Right lobe of liver (tissue), 6 donors: ENCODE measurements at regions of chr2 and their contacts with region 1.

Region 1: GRCh38 chr2:198127627-198128026 is 323.2 kb downstream of the PLCL1 start:
- DNase-seq: peak; percentile 32 to 56 (median 53)
- ATAC-seq: peak; percentile 77 to 87 (median 81)
- H3K4me3 ChIP-seq: no peak overlapping the region
- H3K27ac ChIP-seq: no peak overlapping the region
- H3K4me1 ChIP-seq: no peaks in the 10 kb centered on the region
- H3K27me3 ChIP-seq: no peaks in the 10 kb centered on the region
- CTCF ChIP-seq: peak; percentile 54 to 66 (median 60)
- POLR2A ChIP-seq: no peak

Region 2: DNA sequence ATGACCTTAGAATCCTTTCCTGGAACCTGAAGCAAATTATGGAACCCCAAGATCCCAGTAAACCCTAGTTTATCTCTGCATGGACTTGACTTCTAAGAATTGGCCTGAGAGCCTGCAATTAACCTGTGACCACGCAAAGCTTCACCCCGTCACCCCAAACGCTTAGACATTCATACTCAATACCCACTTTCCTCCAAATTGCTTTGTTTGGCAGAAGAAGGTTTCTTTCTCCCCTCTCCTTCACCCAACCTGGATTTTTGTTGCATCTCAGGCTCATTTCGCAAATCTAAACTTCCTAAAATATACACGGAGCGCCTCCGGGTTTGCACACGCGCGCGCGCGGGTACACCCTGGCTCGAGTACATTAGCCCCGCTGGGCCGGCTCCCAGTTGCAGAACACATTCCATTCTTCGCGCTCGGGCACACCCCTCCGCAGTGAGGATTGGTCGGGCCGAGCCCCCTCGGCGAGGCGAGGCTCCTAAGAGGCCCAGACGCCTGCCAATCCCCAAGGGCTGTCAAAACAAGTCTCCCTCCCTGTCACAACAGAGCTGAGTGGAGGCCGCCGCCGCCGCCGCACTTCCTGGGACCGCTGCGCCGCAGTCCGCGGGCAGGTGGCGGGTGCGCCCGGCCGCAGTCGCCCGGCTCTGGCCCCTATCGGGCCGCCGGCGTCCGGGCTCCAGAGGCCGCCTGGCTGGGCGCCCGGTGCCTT is 323.4 kb before region 1 on chr2 and contains the start of gene PLCL1:
- intact Hi-C with region 1: loop called in 1 of 2 experiments (anchors 5 kb)
- DNase-seq: peak; percentile 91 to 93 (median 91)
- ATAC-seq: peak; percentile 94 to 98 (median 96)
- H3K4me3 ChIP-seq: peak within 1 kb of the TSS; percentile 49 to 58 (median 51)
- H3K27ac ChIP-seq: peak within 1 kb of the TSS in 1 of 3 donors; percentile 22
- H3K4me1 ChIP-seq: peaks cover 0 to 11% (median 2%) of the 10 kb centered on the region in 4 donors
- H3K27me3 ChIP-seq: no peaks in the 10 kb centered on the region
- CTCF ChIP-seq: peak in 2 of 4 donors; percentile 23 to 24
- POLR2A ChIP-seq: peak; percentile 60
- total RNA-seq, gene PLCL1: 0.12 to 0.37 (median 0.24) TPM

Region 3: GRCh38 chr2:197931661-197932312 is 195.8 kb before region 1 on chr2:
- intact Hi-C with region 1: no loop called
- DNase-seq: no peak
- ATAC-seq: no peak
- H3K4me3 ChIP-seq: no peak overlapping the region
- H3K27ac ChIP-seq: no peak overlapping the region
- H3K4me1 ChIP-seq: no peaks in the 10 kb centered on the region
- H3K27me3 ChIP-seq: no peaks in the 10 kb centered on the region
- CTCF ChIP-seq: no peak
- POLR2A ChIP-seq: no peak